Activated naive CD4-positive, alpha-beta T cell treated with anti-CD3 and anti-CD28 coated beads for 36 hours (primary cell): ENCODE measurements at regions of chr3 and their contacts with region 1.

Region 1: DNA sequence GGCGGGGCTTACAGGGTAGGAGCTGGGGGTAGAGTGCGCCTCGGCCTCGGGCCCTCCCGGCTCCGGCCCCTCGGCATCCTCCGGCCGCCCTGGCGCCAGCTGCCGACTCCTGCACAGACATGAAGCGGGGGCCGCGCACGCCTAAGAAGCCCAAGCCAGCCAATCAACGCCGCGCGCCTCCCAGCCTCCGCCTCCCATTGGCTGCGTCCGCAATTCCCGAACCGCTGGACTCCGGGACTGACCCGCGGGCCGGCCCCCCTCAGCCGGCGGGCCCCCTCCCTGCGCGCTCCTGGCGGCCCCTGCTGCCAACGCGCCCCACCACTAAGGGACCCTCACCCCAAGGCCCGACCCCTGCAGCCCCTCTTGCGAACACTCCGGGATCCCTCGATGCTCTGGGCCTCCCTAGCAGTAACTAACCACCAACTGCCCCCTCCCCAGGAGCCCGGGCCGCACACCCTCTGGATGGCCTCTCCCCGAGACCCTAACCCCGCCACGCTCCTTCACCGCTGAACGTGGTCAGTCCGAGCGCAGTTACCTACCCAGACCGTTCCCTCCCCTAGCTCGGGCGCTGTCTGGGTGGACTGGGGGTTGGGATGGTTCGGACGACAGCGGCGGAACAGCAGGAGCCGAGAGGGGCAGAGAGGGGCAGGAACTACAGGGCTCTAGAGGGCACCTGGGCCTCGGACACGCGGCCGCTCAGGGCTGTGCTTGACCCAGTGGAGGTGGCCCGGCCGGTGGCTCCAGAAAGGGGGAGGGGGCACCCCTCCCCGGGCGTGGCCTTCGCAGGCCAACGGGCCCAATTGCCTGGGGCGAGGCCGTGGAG is 5.0 kb downstream of the GATA2 start:
- DNase-seq: peak; percentile 44
- H3K4me3 Mint-ChIP-seq: peak overlapping the region; percentile 72
- H3K27ac Mint-ChIP-seq: no peak overlapping the region
- H3K4me1 Mint-ChIP-seq: peaks cover 45% of the 10 kb centered on the region
- H3K27me3 Mint-ChIP-seq: peaks cover 72% of the 10 kb centered on the region

Region 2: GRCh38 chr3:128447561-128448013 is 40.4 kb before region 1 on chr3:
- CTCF ChIA-PET with region 1: no interaction called
- intact Hi-C with region 1: loop called (anchors 1 kb)
- DNase-seq: peak; percentile 95
- H3K4me3 Mint-ChIP-seq: no peak overlapping the region
- H3K27ac Mint-ChIP-seq: peak overlapping the region; percentile 95
- H3K4me1 Mint-ChIP-seq: peaks cover 33% of the 10 kb centered on the region
- H3K27me3 Mint-ChIP-seq: peaks cover 2% of the 10 kb centered on the region

Region 3: GRCh38 chr3:128524374-128525299 is 36.6 kb after region 1 on chr3:
- CTCF ChIA-PET with region 1: no interaction called
- intact Hi-C with region 1: no loop called
- DNase-seq: no peak
- H3K4me3 Mint-ChIP-seq: no peak overlapping the region
- H3K27ac Mint-ChIP-seq: no peak overlapping the region
- H3K4me1 Mint-ChIP-seq: no peaks in the 10 kb centered on the region
- H3K27me3 Mint-ChIP-seq: peaks cover 19% of the 10 kb centered on the region